ENCODE measurements at regions of chr1 and their contacts with region 1.

Region 1: DNA sequence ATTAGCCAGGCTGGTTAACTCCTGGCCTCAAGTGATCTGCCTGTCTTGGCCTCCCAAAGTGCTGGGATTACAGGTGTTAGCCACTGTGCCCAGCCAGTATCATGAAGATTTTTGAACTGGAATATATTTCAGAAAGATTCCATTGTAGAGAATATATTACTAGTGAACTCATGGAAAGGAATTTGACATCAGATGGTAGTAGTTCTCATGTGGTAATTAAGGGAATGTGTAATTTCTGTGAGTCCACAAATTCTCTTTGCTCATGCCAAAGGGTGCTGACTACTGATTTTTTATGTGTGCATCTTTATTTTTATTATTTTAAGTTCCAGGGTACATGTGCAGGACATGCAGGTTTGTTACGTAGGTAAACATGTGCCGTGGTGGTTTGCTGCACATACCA is 10.4 kb downstream of the DTL start:
- DNase-seq: no peak
- H3K4me3 ChIP-seq: no peak overlapping the region
- H3K27me3 ChIP-seq: no peaks in the 10 kb centered on the region
- CTCF ChIP-seq: no peak

Region 2: GRCh38 chr1:212062832-212063438 is 17.0 kb after region 1 on chr1:
- CTCF ChIA-PET with region 1: interaction called, 24 read pairs
- POLR2A ChIA-PET with region 1: no interaction called
- DNase-seq: no peak
- H3K4me3 ChIP-seq: no peak overlapping the region
- H3K27me3 ChIP-seq: no peaks in the 10 kb centered on the region
- CTCF ChIP-seq: peak; percentile 59

Region 3: DNA sequence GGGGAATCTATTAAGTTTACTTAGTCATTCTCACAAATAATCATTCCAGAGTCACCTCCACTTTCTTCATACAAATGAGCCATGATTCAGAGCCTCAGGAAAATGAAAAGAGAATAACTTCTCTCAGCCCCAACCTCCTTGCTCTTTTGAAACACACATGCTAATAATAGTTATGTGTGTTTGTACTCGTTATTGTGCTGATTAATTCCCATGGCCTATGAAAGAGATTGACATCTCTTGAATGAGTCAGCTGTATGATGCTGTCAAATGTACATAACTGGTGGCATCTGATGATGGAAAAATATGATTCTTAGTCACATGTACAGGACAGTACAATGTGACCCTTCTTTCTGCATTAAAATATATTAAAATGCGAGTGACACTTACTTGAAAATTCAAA is 31.1 kb after region 1 on chr1:
- CTCF ChIA-PET with region 1: no interaction called
- POLR2A ChIA-PET with region 1: no interaction called
- DNase-seq: no peak
- H3K4me3 ChIP-seq: no peak overlapping the region
- H3K27me3 ChIP-seq: no peaks in the 10 kb centered on the region
- CTCF ChIP-seq: no peak

Region 4: DNA sequence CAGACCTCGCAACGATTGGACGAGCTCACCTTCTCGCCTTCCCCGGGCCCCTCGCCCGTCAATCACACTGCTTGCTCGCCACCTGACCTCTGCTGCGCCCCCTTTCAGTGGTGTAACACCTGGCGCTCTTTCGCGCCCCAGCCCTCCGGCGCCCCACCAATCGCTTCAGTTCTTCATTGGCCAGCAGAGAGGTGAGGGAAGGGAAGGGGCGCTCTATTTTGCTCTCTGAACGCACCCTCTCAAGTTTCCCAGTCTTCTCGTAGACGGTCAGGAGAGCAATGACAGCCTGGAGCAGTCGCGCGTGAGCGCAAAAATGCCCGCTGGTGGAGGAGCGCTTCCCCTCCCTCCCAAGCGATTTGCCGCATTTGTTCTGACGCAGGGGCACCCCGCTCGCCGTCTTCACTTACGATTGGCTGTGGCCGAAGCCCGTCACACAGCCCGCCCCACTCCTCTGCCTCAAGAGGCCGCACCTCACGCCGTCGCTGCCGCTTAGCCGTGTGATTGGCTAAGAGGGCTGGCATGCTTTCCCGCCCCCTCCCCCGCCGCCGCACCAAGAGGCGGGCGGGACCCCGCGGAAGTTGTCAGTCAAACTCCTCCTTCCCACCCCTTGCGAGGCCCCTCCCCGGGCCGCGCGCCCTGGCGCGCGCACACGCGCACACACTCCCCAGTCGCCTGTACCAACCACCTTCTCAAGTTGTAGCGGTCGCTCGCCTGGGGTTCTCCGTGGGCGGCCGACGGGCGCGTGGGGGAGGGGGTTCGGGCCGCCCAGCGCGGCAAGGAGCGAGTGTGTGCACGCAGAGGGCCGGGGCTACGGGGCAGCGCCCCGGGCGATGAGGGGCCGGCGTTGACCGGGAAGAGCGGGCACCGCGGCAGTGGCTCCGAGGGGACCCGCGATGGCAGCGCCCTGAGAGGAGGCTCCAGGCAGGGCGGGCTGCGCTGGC is 239.0 kb after region 1 on chr1 and contains the start of gene PPP2R5A:
- CTCF ChIA-PET with region 1: no interaction called
- POLR2A ChIA-PET with region 1: no interaction called
- DNase-seq: peak; percentile 96
- H3K4me3 ChIP-seq: peak within 1 kb of the TSS; percentile 80
- H3K27me3 ChIP-seq: no peaks in the 10 kb centered on the region
- CTCF ChIP-seq: peak; percentile 21; the same call in 1 of the 2 replicates
- polyA plus RNA-seq, gene PPP2R5A: 10.2 and 18.3 TPM in 2 replicates

Measured in BJ (cell line).